Lower leg skin (tissue), 4 donors: ENCODE measurements at regions of chr4 and their contacts with region 1.

Region 1: GRCh38 chr4:4334798-4335520 is 44.9 kb downstream of the ZBTB49 start:
- DNase-seq: peak in 1 of 2 donors; percentile 35
- H3K4me3 ChIP-seq: no peak overlapping the region
- CTCF ChIP-seq: no peak
- POLR2A ChIP-seq: no peak

Region 2: GRCh38 chr4:3945511-3946290 is 389.3 kb before region 1 on chr4:
- intact Hi-C with region 1: no loop called
- DNase-seq: no peak
- H3K4me3 ChIP-seq: no peak overlapping the region
- CTCF ChIP-seq: no peak
- POLR2A ChIP-seq: no peak

Region 3: GRCh38 chr4:4256799-4257198 is 78.2 kb before region 1 on chr4:
- intact Hi-C with region 1: loop called (anchors 5 kb)
- DNase-seq: no peak
- H3K4me3 ChIP-seq: no peak overlapping the region
- CTCF ChIP-seq: no peak
- POLR2A ChIP-seq: no peak

Region 4: GRCh38 chr4:4323705-4324534 is 11.0 kb before region 1 on chr4:
- intact Hi-C with region 1: no loop called
- DNase-seq: peak in 1 of 2 donors; percentile 45
- H3K4me3 ChIP-seq: no peak overlapping the region
- CTCF ChIP-seq: no peak
- POLR2A ChIP-seq: no peak